ENCODE measurements at regions of chr3 and their contacts with region 1.

Region 1: GRCh38 chr3:39189959-39190269 is 2.5 kb downstream of the XIRP1 start:
- DNase-seq: peak; percentile 72
- ATAC-seq: peak; percentile 64
- H3K4me3 Mint-ChIP-seq: no peak overlapping the region
- H3K27ac Mint-ChIP-seq: no peak overlapping the region
- H3K4me1 Mint-ChIP-seq: peaks cover 28% of the 10 kb centered on the region
- H3K27me3 Mint-ChIP-seq: no peaks in the 10 kb centered on the region

Region 2: GRCh38 chr3:39260957-39261356 is 71.0 kb after region 1 on chr3:
- CTCF ChIA-PET with region 1: interaction called, 15 read pairs
- POLR2A ChIA-PET with region 1: no interaction called
- intact Hi-C with region 1: loop called in 1 of 2 experiments (anchors 5 kb)
- DNase-seq: peak; percentile 76
- ATAC-seq: peak; percentile 85
- H3K4me3 Mint-ChIP-seq: no peak overlapping the region
- H3K27ac Mint-ChIP-seq: no peak overlapping the region
- H3K4me1 Mint-ChIP-seq: peaks cover 33% of the 10 kb centered on the region
- H3K27me3 Mint-ChIP-seq: peaks cover 3% of the 10 kb centered on the region

Region 3: GRCh38 chr3:39279745-39280517 is 90.0 kb after region 1 on chr3 and contains the start of gene CX3CR1:
- CTCF ChIA-PET with region 1: interaction called, 10 read pairs
- POLR2A ChIA-PET with region 1: no interaction called
- intact Hi-C with region 1: no loop called
- DNase-seq: no peak
- ATAC-seq: no peak
- H3K4me3 Mint-ChIP-seq: no peak within 1 kb of the TSS
- H3K27ac Mint-ChIP-seq: no peak within 1 kb of the TSS
- H3K4me1 Mint-ChIP-seq: peaks cover 11% of the 10 kb centered on the region
- H3K27me3 Mint-ChIP-seq: no peaks in the 10 kb centered on the region
- total RNA-seq, gene CX3CR1: 0.14 to 0.16 TPM

Region 4: DNA sequence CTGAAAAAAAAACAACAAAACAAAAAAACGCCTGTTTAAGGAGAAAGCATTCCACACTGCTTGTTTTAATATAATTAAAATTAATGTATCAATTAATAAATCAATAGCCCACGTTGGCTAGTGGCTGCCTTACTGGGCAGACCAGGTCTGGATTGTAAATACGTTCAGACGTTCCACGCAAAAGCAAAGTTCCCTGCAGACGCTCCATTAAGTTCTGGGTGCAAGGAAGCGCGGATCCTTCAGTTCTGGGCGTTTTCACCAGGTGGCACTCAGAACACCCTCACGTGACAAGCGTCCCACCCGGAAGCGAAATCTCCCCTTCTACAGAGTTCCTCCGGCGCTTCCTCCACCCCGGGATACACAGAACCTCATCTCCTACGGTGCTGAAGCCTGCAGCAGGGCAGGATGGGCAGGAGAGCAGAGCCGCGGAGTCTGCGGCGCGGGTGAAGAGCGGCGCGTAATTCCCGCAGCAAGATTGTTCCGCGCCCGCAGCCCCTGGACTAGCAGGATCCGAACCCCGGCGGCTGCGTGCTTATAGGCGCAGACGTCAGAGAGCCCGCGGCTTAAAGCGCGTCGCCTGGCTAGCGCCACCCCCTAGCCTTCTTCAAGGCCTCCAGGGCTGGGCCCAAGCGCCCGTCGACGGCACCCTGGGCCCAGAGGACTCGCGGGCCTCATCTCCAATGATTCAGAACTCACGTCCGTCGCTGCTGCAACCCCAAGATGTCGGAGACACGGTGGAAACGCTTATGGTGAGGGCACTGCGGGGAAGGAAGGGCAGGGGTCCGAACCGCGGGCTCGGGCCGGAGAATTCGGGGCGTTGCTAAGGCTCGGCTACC is 193.3 kb after region 1 on chr3 and contains the start of gene SLC25A38:
- CTCF ChIA-PET with region 1: interaction called, 19 read pairs
- POLR2A ChIA-PET with region 1: no interaction called
- intact Hi-C with region 1: loop called (anchors 2 to 5 kb)
- DNase-seq: peak; percentile 91
- ATAC-seq: peak; percentile 88
- H3K4me3 Mint-ChIP-seq: peak within 1 kb of the TSS; percentile 97
- H3K27ac Mint-ChIP-seq: peak within 1 kb of the TSS; percentile 97
- H3K4me1 Mint-ChIP-seq: peaks cover 43% of the 10 kb centered on the region
- H3K27me3 Mint-ChIP-seq: no peaks in the 10 kb centered on the region
- total RNA-seq, gene SLC25A38: 23.0 to 24.8 TPM